OCI-LY7 (cell line): ENCODE measurements at regions of chr3 and their contacts with region 1.

Region 1: DNA sequence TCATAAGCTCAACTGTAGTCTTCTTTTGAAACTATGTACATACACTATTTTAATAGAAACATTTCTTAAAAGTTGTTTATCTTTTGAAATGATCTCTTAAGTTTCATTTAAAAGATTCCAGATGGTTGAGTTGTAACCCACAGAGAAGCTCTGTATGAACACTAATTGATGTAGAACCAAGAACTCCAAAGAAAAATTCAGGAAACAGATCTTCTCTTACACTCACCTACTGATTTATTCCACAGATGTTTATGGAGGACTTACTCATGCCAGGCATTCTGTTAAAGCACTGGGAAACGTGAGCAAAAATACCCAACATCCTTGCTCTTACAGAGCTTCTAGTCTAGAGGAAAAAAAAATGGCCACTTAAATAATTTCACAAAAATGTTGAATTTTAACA is 551.1 kb downstream of the NAALADL2 start:
- DNase-seq: no peak
- H3K4me3 ChIP-seq: no peak overlapping the region
- H3K27ac ChIP-seq: no peak overlapping the region
- H3K4me1 ChIP-seq: no peaks in the 10 kb centered on the region
- CTCF ChIP-seq: no peak

Region 2: DNA sequence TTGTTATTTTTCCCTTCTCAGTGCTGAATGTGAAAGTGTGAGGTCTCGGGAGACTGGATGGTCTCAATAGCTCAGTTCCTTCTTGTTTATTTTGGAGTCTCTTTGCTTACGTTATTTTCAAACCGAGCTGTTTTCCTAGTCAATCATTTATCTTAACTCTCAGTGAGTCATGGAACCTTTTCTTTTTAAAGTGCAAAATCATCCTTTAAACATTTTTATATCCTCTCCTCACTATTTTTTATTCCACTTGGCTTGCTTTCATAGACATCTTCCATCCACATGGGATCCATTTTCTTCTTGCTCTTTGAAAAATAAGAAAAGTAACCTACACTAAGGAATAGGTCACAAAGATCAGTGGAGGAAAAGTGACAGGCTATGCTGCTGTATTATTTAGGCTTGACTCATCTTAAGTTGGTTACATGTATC is 53.3 kb before region 1 on chr3:
- CTCF ChIA-PET with region 1: no interaction called
- POLR2A ChIA-PET with region 1: no interaction called
- intact Hi-C with region 1: no loop called
- DNase-seq: no peak
- H3K4me3 ChIP-seq: no peak overlapping the region
- H3K27ac ChIP-seq: no peak overlapping the region
- H3K4me1 ChIP-seq: no peaks in the 10 kb centered on the region
- CTCF ChIP-seq: no peak

Region 3: GRCh38 chr3:175477651-175478224 is 67.5 kb after region 1 on chr3:
- CTCF ChIA-PET with region 1: no interaction called
- POLR2A ChIA-PET with region 1: no interaction called
- intact Hi-C with region 1: loop called (anchors 10 kb)
- DNase-seq: no peak
- H3K4me3 ChIP-seq: no peak overlapping the region
- H3K27ac ChIP-seq: no peak overlapping the region
- H3K4me1 ChIP-seq: no peaks in the 10 kb centered on the region
- CTCF ChIP-seq: no peak